Activated naive CD4-positive, alpha-beta T cell treated with anti-CD3 and anti-CD28 coated beads for 36 hours (primary cell): ENCODE measurements at regions of chr1 and their contacts with region 1.

Region 1: DNA sequence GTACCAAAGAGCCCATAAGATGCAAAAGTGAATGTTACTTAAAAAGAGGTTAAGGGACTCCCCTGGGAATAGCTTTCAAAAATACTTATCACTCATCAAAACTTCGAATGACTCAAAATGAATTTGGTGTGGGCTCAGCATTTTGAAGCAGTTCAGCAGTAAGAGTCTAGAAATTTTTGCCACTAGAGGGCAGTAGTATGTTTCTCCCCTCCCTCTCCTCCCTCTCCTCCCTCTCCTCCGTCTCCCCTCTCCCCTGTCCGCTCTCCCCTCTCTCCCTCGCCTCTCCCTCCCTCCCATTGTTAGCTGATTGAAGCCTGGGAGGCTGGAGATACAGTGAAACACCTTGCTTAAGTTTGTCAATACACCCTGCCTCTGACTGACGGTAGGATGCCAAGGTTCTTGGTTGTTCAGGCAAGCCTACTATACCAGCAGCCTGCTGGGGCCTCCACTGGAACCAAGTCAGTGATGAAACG is 70.8 kb upstream of the TENT5C start:
- DNase-seq: peak; percentile 50
- H3K4me3 Mint-ChIP-seq: no peak overlapping the region
- H3K27ac Mint-ChIP-seq: no peak overlapping the region
- H3K4me1 Mint-ChIP-seq: peaks cover 23% of the 10 kb centered on the region
- H3K27me3 Mint-ChIP-seq: no peaks in the 10 kb centered on the region

Region 2: DNA sequence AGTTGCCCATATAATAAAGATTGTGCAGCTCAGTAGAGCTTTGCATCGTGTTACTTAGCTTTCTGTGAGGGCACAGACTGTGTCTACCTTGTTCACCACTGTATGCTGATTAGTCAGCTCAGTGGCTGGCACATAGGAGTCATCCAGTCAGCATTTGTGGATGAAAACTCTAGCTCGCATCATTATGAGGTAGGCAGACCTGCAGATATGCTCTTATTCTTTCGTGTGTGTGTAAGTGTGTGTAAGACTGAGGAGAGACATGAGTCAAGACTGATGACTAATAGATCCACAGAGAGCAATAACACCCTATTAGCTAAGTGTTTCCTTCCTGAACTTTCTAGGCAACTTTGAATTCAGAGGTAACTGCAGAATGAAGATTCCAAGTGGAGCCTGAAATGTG is 457.8 kb before region 1 on chr1:
- CTCF ChIA-PET with region 1: no interaction called
- intact Hi-C with region 1: loop called (anchors 5 kb)
- DNase-seq: peak; percentile 79
- H3K4me3 Mint-ChIP-seq: no peak overlapping the region
- H3K27ac Mint-ChIP-seq: peak overlapping the region; percentile 76
- H3K4me1 Mint-ChIP-seq: peaks cover 38% of the 10 kb centered on the region
- H3K27me3 Mint-ChIP-seq: no peaks in the 10 kb centered on the region

Region 3: GRCh38 chr1:117654493-117655219 is 119.6 kb after region 1 on chr1:
- CTCF ChIA-PET with region 1: interaction called, 26 read pairs
- intact Hi-C with region 1: no loop called
- DNase-seq: no peak
- H3K4me3 Mint-ChIP-seq: no peak overlapping the region
- H3K27ac Mint-ChIP-seq: no peak overlapping the region
- H3K4me1 Mint-ChIP-seq: peaks cover 72% of the 10 kb centered on the region
- H3K27me3 Mint-ChIP-seq: peaks cover 11% of the 10 kb centered on the region

Region 4: DNA sequence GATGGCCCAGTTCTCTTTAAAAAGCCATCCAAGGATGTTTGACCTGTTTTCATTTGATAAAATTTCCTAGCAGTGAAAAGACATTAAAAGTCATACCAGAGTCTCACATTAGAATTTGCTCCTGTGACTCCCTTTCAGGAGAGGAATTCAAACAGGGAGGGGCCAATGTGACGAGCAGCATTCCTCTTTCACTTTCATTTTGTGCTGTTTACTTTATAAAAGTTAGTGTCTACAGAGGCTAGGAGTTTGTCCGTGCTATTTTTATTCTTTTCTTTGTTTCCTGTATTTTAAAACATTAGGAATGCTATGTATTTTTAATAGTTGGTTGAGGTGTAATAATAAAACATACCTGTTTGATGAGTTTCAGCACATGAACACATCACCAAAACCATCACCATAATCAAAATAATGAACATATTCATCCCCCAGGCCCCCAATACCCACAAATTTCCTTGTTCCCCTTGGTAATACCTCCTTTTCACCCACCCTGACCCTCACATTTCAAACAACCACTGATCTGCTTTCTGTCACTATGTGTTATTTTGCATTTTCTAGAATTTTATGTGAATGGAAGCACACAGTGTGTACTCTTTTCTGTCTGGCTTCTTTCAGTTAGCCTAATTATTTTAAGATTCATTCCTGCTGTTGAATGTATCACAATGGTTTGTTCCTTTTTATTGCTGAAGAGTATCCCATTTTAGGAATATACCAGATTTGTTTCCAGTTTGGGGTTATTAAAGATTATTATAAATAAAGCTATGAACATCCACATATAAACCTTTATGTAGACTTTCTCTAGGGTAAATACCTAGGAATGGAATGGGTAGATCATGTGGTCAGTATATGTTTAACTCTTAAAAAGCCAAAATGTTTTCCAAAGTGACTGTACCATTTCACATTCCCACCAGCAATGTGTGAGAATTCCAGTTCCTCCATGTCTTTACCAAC is 200.3 kb after region 1 on chr1:
- CTCF ChIA-PET with region 1: interaction called, 4 read pairs
- intact Hi-C with region 1: loop called (anchors 1 kb)
- DNase-seq: peak; percentile 58
- H3K4me3 Mint-ChIP-seq: peak overlapping the region; percentile 64
- H3K27ac Mint-ChIP-seq: peak overlapping the region; percentile 81
- H3K4me1 Mint-ChIP-seq: peaks cover 11% of the 10 kb centered on the region
- H3K27me3 Mint-ChIP-seq: no peaks in the 10 kb centered on the region

Region 5: GRCh38 chr1:117929173-117929989 is 394.4 kb after region 1 on chr1 and contains the starts of genes GDAP2 and WDR3:
- CTCF ChIA-PET with region 1: no interaction called
- intact Hi-C with region 1: loop called (anchors 10 kb)
- DNase-seq: peak; percentile 97
- H3K4me3 Mint-ChIP-seq: peak within 1 kb of the TSS; percentile 96
- H3K27ac Mint-ChIP-seq: peak within 1 kb of the TSS; percentile 79
- H3K4me1 Mint-ChIP-seq: peaks cover 54% of the 10 kb centered on the region
- H3K27me3 Mint-ChIP-seq: no peaks in the 10 kb centered on the region
- total RNA-seq, gene GDAP2: 19.9 to 20.0 TPM
- total RNA-seq, gene WDR3: 45.2 to 49.6 TPM